Activated T-helper 1 cell treated with anti-CD3 and anti-CD28 coated beads, Interleukin-12 subunit alpha, Interleukin-12 subunit beta, Interleukin-2, Interleukin-4 antibody, amounts not matched to agents 30 ng/mL and 10 ng/mL and 1 ng/mL, durations not matched to agents 14 hours and 24 hours and 36 hours (primary cell): ENCODE measurements at regions of chr5 and their contacts with region 1.

Region 1: GRCh38 chr5:147188200-147189108 is 46.4 kb upstream of the STK32A start:
- DNase-seq: peak; percentile 20
- H3K4me3 Mint-ChIP-seq: no peak overlapping the region
- H3K27ac Mint-ChIP-seq: no peak overlapping the region
- H3K4me1 Mint-ChIP-seq: peaks cover 5% of the 10 kb centered on the region
- H3K27me3 Mint-ChIP-seq: no peaks in the 10 kb centered on the region

Region 2: DNA sequence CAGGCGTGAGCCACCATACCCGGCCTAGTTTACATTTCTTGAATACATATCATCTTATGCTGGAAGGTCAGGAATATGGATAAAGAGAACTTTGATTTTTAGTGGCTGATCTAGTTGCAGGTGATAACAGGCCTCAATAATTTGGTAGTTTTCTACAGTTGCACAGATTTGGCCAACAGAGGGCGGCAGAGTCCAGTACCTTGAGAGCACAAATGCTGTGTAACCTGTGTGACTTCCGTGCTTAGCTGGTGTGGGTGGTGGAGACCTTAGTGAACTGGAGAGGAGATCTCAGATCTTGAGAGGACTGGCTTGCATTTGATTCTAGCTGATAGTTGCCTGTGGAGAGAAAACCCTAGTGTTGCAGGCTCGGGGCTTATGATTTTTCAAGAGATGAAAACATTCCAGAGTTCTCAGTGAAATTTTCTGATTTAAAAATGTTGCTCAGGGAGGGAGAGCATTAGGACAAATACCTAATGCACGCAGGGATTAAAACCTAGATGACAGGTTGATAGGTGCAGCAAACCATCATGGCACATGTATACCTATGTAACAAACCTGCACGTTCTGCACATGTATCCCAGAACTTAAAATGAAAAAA is 655.1 kb before region 1 on chr5:
- intact Hi-C with region 1: loop called (anchors 1 kb)
- DNase-seq: peak; percentile 58
- H3K4me3 Mint-ChIP-seq: no peak overlapping the region
- H3K27ac Mint-ChIP-seq: no peak overlapping the region
- H3K4me1 Mint-ChIP-seq: peaks cover 16% of the 10 kb centered on the region
- H3K27me3 Mint-ChIP-seq: peaks cover 3% of the 10 kb centered on the region

Region 3: DNA sequence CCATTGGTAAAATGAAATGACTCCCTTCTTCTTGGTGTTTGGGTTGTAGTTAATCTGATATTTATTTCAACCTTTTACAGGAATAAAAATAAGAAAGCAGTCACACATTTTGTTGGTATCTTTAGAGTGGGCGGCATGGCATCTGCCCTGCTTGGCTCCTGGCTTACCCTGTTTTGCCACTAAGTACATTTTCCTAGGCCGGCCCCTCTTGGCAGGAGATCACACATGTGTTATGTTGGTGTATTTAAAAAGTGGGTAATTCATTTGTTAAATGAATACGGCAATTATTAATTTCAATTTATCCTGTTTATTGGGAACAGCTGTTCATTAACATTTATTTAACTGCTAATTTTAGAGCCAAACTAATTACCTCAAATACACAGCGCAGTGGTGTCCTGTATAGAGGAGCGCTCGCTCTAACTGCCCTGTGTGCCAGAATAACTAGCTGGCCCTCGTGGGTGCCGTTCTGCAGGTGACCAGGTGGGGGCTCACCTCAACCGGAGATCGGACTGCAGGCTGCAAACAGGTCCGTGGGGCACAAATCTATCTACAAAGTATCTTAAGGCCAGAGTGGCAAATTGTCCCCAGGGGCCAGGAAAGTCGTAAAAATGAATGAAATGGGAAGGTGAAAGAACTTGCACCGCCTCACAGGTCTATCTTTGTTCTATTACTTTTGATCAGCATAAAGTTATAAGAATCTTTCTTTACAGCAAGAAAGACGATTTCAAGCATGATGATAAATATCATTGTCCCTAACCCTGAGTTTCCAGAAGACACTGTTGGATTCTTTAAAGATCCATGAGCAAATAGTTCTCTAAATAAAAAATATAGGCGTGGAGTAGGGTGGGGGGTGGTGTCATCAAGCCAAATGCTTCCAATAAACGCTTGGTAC is 646.2 kb before region 1 on chr5:
- intact Hi-C with region 1: loop called (anchors 1 kb)
- DNase-seq: peak; percentile 38
- H3K4me3 Mint-ChIP-seq: no peak overlapping the region
- H3K27ac Mint-ChIP-seq: no peak overlapping the region
- H3K4me1 Mint-ChIP-seq: no peaks in the 10 kb centered on the region
- H3K27me3 Mint-ChIP-seq: peaks cover 7% of the 10 kb centered on the region

Region 4: GRCh38 chr5:146662229-146662628 is 526.2 kb before region 1 on chr5:
- intact Hi-C with region 1: loop called (anchors 1 kb)
- DNase-seq: no peak
- H3K4me3 Mint-ChIP-seq: no peak overlapping the region
- H3K27ac Mint-ChIP-seq: no peak overlapping the region
- H3K4me1 Mint-ChIP-seq: no peaks in the 10 kb centered on the region
- H3K27me3 Mint-ChIP-seq: no peaks in the 10 kb centered on the region

Region 5: DNA sequence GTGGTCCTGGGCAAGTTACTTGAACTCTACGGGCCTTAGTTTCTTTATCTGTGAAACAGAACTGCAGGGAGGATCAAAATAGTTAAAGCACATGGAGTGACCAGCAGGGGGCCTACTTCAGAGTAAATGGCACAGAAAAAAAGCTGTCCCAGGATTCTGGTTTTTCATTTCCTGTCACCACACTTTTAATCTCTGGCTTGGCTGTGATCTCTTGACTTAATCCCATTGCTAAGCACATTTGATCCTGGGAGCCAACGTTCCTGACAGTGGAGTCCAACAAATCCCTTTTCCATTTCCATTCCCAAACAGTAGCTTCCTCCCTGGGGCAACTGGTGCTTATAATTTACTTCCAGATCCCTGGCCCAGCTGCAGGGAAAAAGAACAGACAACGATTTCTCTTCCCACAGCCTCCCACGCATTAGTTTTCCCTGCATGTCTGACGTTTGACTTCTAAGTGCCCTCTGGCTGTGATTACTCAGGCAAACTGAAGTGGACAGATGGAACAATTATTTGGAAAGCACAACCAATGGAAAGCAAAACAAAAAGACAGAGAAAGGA is 90.1 kb before region 1 on chr5:
- intact Hi-C with region 1: loop called (anchors 1 kb)
- DNase-seq: no peak
- H3K4me3 Mint-ChIP-seq: no peak overlapping the region
- H3K27ac Mint-ChIP-seq: no peak overlapping the region
- H3K4me1 Mint-ChIP-seq: no peaks in the 10 kb centered on the region
- H3K27me3 Mint-ChIP-seq: no peaks in the 10 kb centered on the region